ENCODE measurements at regions of chr5 and their contacts with region 1.

Region 1: GRCh38 chr5:68446487-68446894 is 230.9 kb downstream of the PIK3R1 start:
- DNase-seq: peak; percentile 31
- CTCF ChIP-seq: no peak

Region 2: DNA sequence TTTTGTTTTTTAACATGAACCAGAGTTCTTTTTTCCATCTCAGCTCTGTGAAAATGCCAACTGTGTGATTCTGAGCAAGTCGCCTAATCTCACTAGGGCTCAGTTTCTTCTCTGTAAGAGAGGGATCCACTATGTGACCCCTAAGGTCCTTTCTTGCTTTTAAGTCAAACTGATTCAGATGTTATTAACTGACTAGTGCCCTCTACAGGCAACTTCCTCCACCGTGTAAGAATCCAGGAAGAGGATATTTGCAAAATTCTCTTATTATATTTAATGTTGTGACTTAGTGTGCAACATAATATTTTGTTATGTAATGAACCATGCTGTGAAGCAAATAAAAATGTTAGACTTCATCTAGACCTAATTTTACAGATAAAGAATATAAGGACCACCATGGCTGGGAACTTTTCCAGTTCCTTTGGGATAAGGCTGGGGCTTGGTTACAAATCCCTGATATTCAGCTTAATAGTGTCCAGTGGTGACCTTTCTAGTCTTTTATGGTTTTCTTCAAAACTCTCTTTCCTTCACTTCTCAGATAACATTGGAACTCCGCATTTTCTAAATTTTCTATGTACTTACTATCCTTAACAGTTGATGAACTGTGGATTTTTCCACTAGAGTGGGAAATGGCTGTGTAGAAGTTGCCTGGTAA is 13.8 kb after region 1 on chr5:
- CTCF ChIA-PET with region 1: interaction called, 56 read pairs
- POLR2A ChIA-PET with region 1: no interaction called
- DNase-seq: peak; percentile 35
- CTCF ChIP-seq: peak; percentile 65

Region 3: GRCh38 chr5:68529581-68529980 is 83.1 kb after region 1 on chr5:
- CTCF ChIA-PET with region 1: no interaction called
- POLR2A ChIA-PET with region 1: no interaction called
- DNase-seq: no peak
- CTCF ChIP-seq: no peak

Measured in GM10248 (cell line).